Right cardiac atrium (tissue), 5 donors: ENCODE measurements at regions of chr9 and their contacts with region 1.

Region 1: DNA sequence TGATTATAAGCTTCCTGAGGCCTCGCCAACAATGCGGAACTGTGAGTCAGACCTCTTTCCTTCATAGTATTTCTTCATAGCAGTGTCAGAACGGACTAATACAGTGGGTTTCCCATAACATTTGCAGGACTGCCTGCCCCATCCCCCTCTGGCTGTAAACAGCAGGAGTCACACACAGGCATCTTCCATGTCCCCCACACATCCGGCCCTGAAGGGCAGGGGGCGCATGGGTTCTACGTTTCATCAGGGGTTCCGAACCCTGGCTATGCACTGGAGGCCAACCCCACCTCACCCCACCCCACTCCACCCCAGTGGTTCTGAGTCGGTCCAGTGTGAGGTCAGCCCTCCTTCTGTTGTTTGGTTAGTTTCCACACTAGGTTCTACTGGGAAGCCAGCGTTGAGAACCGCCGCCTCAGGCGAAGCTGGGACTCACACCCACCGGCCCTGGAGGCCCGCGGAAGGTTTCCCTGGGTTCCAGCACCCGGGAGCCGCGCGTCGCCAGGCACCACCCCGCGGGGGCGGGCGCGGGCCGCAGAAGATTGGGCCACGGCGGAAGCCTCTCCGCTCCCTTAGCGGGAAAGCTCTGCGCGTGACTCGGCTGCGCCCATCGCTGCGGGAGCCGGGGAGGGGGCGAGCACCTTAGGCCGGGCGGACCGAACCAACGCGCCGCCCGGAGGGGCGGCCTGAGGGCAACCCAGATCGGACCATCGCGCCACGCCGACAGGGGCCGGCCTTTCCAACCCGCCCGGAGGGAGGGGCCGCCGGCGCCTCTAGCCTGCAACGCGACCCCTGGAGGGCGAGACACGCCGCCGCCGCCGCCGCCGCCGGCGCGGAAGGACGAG is at the start of gene RUSC2:
- DNase-seq: peak; percentile 89 to 94 (median 94)
- ATAC-seq: peak; percentile 89 to 91
- H3K4me3 ChIP-seq: peak within 1 kb of the TSS; percentile 51
- H3K27ac ChIP-seq: peak within 1 kb of the TSS; percentile 59
- H3K4me1 ChIP-seq: peaks cover 10% of the 10 kb centered on the region
- H3K27me3 ChIP-seq: no peaks in the 10 kb centered on the region
- total RNA-seq, gene RUSC2: 30.7 to 41.4 (median 35.5) TPM

Region 2: DNA sequence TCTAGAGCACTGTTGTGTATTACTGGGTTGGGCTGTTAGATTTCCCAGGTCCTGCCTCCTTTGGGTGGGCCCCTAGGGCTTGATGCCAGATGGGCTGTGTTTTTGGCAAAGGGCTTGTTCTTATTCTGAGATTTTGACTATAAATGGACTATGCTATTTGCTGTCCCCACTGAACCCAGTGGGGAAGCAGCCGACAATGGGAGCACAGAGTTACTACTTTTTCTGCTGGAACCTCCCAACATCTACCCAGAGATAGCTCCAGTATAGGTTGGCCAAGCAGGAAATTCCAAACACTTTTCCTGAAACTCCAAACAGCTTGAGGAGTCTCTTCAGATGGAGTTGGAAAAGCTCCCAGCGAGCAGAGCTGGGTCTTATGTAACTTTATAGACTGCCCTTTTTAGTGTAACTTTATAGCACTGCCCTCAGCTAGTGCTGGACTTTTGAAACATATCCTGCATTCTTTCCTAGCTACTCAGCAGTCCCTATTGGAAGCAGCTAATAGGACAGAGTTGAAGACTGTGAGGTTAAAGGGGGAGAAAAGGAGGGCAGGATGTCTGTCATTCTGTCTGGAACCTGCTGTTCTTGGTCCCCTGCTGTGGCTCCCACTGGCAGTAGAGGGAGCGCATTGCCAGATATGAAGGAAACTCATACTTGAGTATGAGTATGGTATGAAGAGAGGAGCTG is 21.4 kb after region 1 on chr9:
- intact Hi-C with region 1: loop called in 1 of 4 experiments (anchors 2 kb)
- DNase-seq: peak; percentile 90 to 94 (median 93)
- ATAC-seq: peak; percentile 96 to 97
- H3K4me3 ChIP-seq: no peak overlapping the region
- H3K27ac ChIP-seq: peak overlapping the region; percentile 84
- H3K4me1 ChIP-seq: peaks cover 8% of the 10 kb centered on the region
- H3K27me3 ChIP-seq: no peaks in the 10 kb centered on the region

Region 3: GRCh38 chr9:35553670-35554543 is 64.4 kb after region 1 on chr9:
- intact Hi-C with region 1: loop called (anchors 2 to 5 kb)
- DNase-seq: peak; percentile 75 to 88 (median 83)
- ATAC-seq: peak; percentile 86 to 89
- H3K4me3 ChIP-seq: no peak overlapping the region
- H3K27ac ChIP-seq: no peak overlapping the region
- H3K4me1 ChIP-seq: peaks cover 2% of the 10 kb centered on the region
- H3K27me3 ChIP-seq: no peaks in the 10 kb centered on the region